Sigmoid colon (tissue), 7 donors: ENCODE measurements at regions of chr14 and their contacts with region 1.

Region 1: GRCh38 chr14:96424109-96424989 is 32.4 kb downstream of the AK7 start:
- DNase-seq: no peak
- H3K4me3 ChIP-seq: peak overlapping the region in 3 of 4 donors; percentile 35 to 46 (median 44)
- H3K27ac ChIP-seq: no peak overlapping the region
- H3K4me1 ChIP-seq: peaks cover 0 to 9% (median 7%) of the 10 kb centered on the region in 4 donors
- H3K27me3 ChIP-seq: peaks cover 0 to 7% (median 0%) of the 10 kb centered on the region in 3 donors
- CTCF ChIP-seq: peak; percentile 48 to 82 (median 78)
- EP300 ChIP-seq: no peak
- POLR2A ChIP-seq: no peak

Region 2: GRCh38 chr14:96297000-96297399 is 127.3 kb before region 1 on chr14:
- intact Hi-C with region 1: loop called (anchors 5 kb)
- DNase-seq: no peak
- H3K4me3 ChIP-seq: no peak overlapping the region
- H3K27ac ChIP-seq: no peak overlapping the region
- H3K4me1 ChIP-seq: no peaks in the 10 kb centered on the region
- H3K27me3 ChIP-seq: no peaks in the 10 kb centered on the region
- CTCF ChIP-seq: peak in 2 of 4 experiments; percentile 29 to 44
- EP300 ChIP-seq: no peak
- POLR2A ChIP-seq: no peak

Region 3: DNA sequence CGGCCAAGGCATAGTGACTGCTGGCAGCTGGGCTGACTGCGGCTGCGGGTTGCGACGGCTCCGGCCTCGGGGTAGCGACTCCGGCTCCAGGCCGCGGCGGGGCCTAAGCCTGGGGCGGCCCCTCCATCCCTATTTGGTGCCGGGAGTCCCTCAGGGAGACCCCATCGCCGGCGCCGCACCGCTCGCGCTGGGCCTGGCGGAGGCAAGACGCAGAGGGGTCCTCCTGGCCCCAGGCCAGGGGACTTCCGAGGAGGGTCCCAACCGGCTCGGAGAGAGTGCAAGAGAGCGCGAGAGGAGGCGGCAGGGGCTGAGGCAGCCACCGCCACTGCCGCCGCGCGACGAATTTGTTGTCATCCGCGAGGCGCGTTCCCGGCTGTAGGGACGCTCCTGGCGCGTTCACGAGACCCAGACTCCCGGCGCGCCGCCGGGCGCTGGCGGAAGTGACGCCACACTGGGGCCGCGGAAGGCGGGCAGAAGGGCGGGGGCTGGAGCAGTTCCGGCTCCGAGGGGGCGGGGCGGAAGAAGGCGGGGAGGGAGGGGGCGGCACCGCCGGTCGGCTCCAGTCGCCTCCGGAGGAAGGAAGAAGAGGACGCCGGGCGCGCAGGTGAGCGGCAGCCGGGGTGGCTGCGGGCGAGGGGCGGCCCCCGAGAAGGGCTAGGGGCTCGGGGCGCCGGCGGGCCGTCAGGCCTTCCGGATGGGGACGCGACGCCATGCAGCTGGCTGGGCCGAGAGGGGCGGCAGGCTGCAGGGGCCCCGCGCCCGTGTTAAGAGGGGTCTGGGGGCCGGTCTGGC is 61.2 kb before region 1 on chr14 and contains the starts of genes ATG2B and GSKIP:
- intact Hi-C with region 1: loop called (anchors 2 kb)
- DNase-seq: peak; percentile 96
- H3K4me3 ChIP-seq: peak within 1 kb of the TSS; percentile 74 to 98 (median 98)
- H3K27ac ChIP-seq: peak within 1 kb of the TSS; percentile 90 to 98 (median 98)
- H3K4me1 ChIP-seq: peaks cover 0 to 46% (median 35%) of the 10 kb centered on the region in 4 donors
- H3K27me3 ChIP-seq: no peaks in the 10 kb centered on the region
- CTCF ChIP-seq: no peak
- EP300 ChIP-seq: no peak
- POLR2A ChIP-seq: peak; percentile 56 to 60
- total RNA-seq, gene ATG2B: 17.9 to 27.1 (median 25.0) TPM
- total RNA-seq, gene GSKIP: 13.2 to 30.7 (median 19.3) TPM

Region 4: GRCh38 chr14:96479435-96480146 is 55.2 kb after region 1 on chr14:
- intact Hi-C with region 1: no loop called
- DNase-seq: no peak
- H3K4me3 ChIP-seq: no peak overlapping the region
- H3K27ac ChIP-seq: no peak overlapping the region
- H3K4me1 ChIP-seq: no peaks in the 10 kb centered on the region
- H3K27me3 ChIP-seq: no peaks in the 10 kb centered on the region
- CTCF ChIP-seq: no peak
- EP300 ChIP-seq: no peak
- POLR2A ChIP-seq: no peak